ENCODE measurements at regions of chr3 and their contacts with region 1.

Region 1: DNA sequence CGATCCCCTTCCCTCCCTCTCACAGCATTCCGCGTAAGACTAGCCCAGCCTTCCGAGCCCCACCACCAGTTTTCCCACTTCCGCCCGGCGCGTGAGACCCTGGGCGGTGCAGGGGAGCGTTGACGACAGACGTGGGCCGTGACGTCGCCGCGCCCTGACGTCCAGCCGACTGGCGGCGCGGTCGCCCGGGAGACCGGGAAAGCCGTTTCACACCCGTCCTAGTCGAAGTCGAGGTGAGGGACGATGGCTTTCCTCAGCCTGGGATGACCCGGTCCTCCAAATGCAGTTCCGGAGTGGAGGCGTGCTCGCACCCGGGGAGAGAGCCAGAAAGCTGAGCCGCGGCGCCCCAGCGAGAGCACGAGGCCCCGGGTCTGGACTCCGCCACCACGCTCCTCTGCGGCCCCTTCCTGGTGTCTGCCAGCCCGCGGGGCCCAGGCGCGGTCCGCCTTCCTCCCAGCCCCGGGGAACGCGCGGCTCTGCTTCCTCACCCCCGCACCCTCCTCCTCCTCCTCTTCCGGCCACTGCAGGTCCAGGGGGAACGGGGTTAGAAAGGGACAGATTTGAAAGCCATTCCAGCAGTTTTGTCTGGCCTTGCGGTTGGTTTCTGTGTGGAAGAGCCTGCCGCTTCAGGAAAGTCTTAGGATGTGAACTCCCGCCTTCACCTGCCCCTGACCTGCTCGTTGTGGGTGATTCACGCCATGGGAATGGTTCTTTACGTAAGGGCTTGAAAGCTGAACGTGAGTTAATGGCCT is at the start of gene LEKR1:
- DNase-seq: peak; percentile 84 to 93 (median 88)
- H3K4me3 ChIP-seq: peak within 1 kb of the TSS; percentile 67
- H3K27ac ChIP-seq: peak within 1 kb of the TSS; percentile 75 to 83
- H3K4me1 ChIP-seq: no peaks in the 10 kb centered on the region
- H3K27me3 ChIP-seq: no peaks in the 10 kb centered on the region
- CTCF ChIP-seq: peak in 2 of 3 donors; percentile 8 to 16
- EP300 ChIP-seq: peak; percentile 3
- POLR2A ChIP-seq: peak; percentile 76
- total RNA-seq, gene LEKR1: 1.5 to 7.8 (median 2.6) TPM

Region 2: GRCh38 chr3:157088601-157089454 is 262.5 kb after region 1 on chr3:
- intact Hi-C with region 1: loop called in 2 of 4 experiments (anchors 5 to 10 kb)
- DNase-seq: peak; percentile 96 to 98 (median 98)
- H3K4me3 ChIP-seq: peak overlapping the region; percentile 48
- H3K27ac ChIP-seq: peak overlapping the region; percentile 86 to 97
- H3K4me1 ChIP-seq: peaks cover 6% of the 10 kb centered on the region
- H3K27me3 ChIP-seq: no peaks in the 10 kb centered on the region
- CTCF ChIP-seq: peak in 2 of 3 donors; percentile 6 to 21
- EP300 ChIP-seq: peak; percentile 69
- POLR2A ChIP-seq: peak; percentile 91

Measured in ovary (tissue), 10 donors.